ENCODE measurements at regions of chr7 and their contacts with region 1.

Region 1: GRCh38 chr7:25389489-25390106 is 161.3 kb upstream of the NPVF start:
- DNase-seq: peak; percentile 59
- H3K4me3 ChIP-seq: no peak overlapping the region
- H3K27ac ChIP-seq: no peak overlapping the region
- H3K4me1 ChIP-seq: peaks cover 8% of the 10 kb centered on the region
- H3K27me3 ChIP-seq: peaks cover 69% of the 10 kb centered on the region
- CTCF ChIP-seq: peak; percentile 63

Region 2: GRCh38 chr7:25259587-25260243 is 129.9 kb before region 1 on chr7:
- CTCF ChIA-PET with region 1: interaction called, 8 read pairs
- POLR2A ChIA-PET with region 1: no interaction called
- intact Hi-C with region 1: loop called (anchors 1 kb)
- DNase-seq: peak; percentile 88
- H3K4me3 ChIP-seq: no peak overlapping the region
- H3K27ac ChIP-seq: no peak overlapping the region
- H3K4me1 ChIP-seq: peaks cover 22% of the 10 kb centered on the region
- H3K27me3 ChIP-seq: peaks cover 9% of the 10 kb centered on the region
- CTCF ChIP-seq: peak; percentile 90

Region 3: GRCh38 chr7:25369786-25370185 is 19.8 kb before region 1 on chr7:
- CTCF ChIA-PET with region 1: no interaction called
- POLR2A ChIA-PET with region 1: no interaction called
- intact Hi-C with region 1: no loop called
- DNase-seq: no peak
- H3K4me3 ChIP-seq: no peak overlapping the region
- H3K27ac ChIP-seq: no peak overlapping the region
- H3K4me1 ChIP-seq: no peaks in the 10 kb centered on the region
- H3K27me3 ChIP-seq: peaks cover 45% of the 10 kb centered on the region
- CTCF ChIP-seq: no peak

Region 4: DNA sequence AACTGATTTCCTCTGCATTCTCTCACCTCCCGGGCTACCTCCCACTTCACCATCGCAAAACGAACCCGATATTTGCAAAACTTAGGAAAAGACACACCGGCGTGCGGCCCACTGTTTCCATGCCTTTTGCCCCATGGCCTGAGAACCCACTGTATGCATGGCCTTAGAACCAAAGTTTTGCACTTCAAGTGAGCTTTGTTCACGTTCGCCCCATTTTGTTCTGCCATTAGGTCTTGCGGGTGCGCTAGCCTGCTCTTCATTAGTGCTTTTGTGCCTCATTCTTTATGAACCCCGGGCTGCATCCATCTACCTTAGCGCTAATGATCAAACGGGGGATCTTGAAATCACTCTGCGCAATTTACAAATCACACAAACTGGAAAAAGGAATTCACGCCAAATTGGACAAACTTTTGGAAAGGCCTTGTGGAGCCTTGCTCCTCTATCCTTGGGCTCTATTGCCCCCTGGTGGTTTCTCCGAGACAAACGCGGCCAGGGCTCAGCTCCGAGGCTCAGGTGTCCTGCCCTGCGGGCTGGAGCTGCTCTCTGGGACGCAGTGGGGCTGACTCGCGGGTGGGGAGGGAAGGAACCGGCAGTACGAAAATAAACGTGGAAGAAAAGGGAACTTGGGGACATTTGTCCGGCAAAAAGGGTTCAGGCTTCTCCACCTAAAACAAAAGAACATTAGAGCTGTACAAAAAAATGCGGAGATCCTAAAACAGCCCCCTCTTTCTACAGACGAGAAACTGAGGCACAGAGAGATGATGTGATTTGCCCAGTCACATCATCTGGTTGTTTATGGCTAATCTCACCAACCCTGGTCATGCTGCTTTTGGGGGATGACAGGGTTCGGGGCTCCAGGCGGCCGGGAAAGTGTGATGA is 462.0 kb after region 1 on chr7:
- CTCF ChIA-PET with region 1: interaction called, 3 read pairs
- POLR2A ChIA-PET with region 1: no interaction called
- intact Hi-C with region 1: loop called (anchors 1 kb)
- DNase-seq: peak; percentile 87
- H3K4me3 ChIP-seq: peak overlapping the region; percentile 20
- H3K27ac ChIP-seq: no peak overlapping the region
- H3K4me1 ChIP-seq: peaks cover 6% of the 10 kb centered on the region
- H3K27me3 ChIP-seq: peaks cover 16% of the 10 kb centered on the region
- CTCF ChIP-seq: peak; percentile 92

Measured in A673 (cell line).